ENCODE measurements at regions of chr5 and their contacts with region 1.

Region 1: GRCh38 chr5:138491669-138492559 is 26.6 kb downstream of the EGR1 start:
- DNase-seq: peak; percentile 72 to 94 (median 84)
- ATAC-seq: peak; percentile 98
- H3K4me3 ChIP-seq: peak overlapping the region; percentile 42 to 63
- H3K4me3 Mint-ChIP-seq: peak overlapping the region; percentile 93
- H3K27ac ChIP-seq: no peak overlapping the region
- H3K27ac Mint-ChIP-seq: no peak overlapping the region
- H3K4me1 ChIP-seq: peaks cover 19% of the 10 kb centered on the region
- H3K4me1 Mint-ChIP-seq: peaks cover 16% of the 10 kb centered on the region
- H3K27me3 ChIP-seq: peaks cover 0 to 15% of the 10 kb centered on the region in 2 experiments
- H3K27me3 Mint-ChIP-seq: peaks cover 18% of the 10 kb centered on the region
- CTCF ChIP-seq: no peak

Region 2: GRCh38 chr5:138464008-138464387 is 27.9 kb before region 1 on chr5:
- CTCF ChIA-PET with region 1: interaction called, 16 read pairs
- POLR2A ChIA-PET with region 1: interaction called, 13 read pairs
- intact Hi-C with region 1: loop called (anchors 1 kb)
- DNase-seq: peak; percentile 85 to 98 (median 93)
- ATAC-seq: peak; percentile 47
- H3K4me3 ChIP-seq: peak overlapping the region; percentile 91 to 97
- H3K4me3 Mint-ChIP-seq: peak overlapping the region; percentile 91
- H3K27ac ChIP-seq: peak overlapping the region; percentile 79 to 100
- H3K27ac Mint-ChIP-seq: peak overlapping the region; percentile 93
- H3K4me1 ChIP-seq: peaks cover 51% of the 10 kb centered on the region
- H3K4me1 Mint-ChIP-seq: peaks cover 48% of the 10 kb centered on the region
- H3K27me3 ChIP-seq: no peaks in the 10 kb centered on the region
- H3K27me3 Mint-ChIP-seq: no peaks in the 10 kb centered on the region
- CTCF ChIP-seq: peak; percentile 87

Region 3: GRCh38 chr5:138725138-138725833 is 233.4 kb after region 1 on chr5:
- CTCF ChIA-PET with region 1: no interaction called
- POLR2A ChIA-PET with region 1: no interaction called
- intact Hi-C with region 1: no loop called
- DNase-seq: peak in 2 of 9 experiments; percentile 5 to 15
- ATAC-seq: no peak
- H3K4me3 ChIP-seq: no peak overlapping the region
- H3K4me3 Mint-ChIP-seq: no peak overlapping the region
- H3K27ac ChIP-seq: no peak overlapping the region
- H3K27ac Mint-ChIP-seq: no peak overlapping the region
- H3K4me1 ChIP-seq: peaks cover 8% of the 10 kb centered on the region
- H3K4me1 Mint-ChIP-seq: peaks cover 11% of the 10 kb centered on the region
- H3K27me3 ChIP-seq: peaks cover 0 to 12% of the 10 kb centered on the region in 2 experiments
- H3K27me3 Mint-ChIP-seq: peaks cover 57% of the 10 kb centered on the region
- CTCF ChIP-seq: no peak